Heart left ventricle (tissue), 16 donors: ENCODE measurements at regions of chr5 and their contacts with region 1.

Region 1: DNA sequence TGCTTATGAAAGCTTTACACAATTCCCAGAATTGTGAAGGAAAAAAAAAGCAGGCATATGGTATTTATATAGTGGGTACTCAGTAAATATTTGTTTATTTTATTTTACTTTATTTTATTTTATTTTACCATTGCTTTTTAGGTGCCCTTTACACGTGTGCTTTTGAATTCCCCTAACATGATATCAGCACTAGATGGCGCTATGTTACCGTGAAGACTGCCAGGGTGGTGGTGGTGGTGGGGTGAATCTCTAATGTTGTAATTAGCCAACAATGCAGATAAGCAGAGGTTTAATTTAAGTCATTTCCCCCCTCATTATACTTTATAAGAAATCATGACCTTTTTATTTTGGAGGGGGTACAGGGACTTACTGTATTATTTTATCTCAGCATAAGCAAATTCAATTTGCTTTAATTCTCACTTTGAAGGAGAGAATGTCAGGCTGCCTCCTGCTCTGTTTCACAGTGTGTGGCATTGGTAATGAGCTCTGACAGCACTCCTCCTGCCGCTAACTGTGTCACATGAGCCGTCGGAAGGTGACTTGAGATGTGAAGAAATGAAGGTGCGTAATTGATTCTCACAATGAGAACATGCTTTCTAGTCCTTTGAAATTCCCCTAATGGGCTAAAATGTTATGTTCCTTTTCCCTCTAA is 165.6 kb downstream of the YTHDC2 start:
- DNase-seq: peak in 1 of 5 donors; percentile 13
- ATAC-seq: peak in 3 of 4 donors; percentile 55 to 68 (median 63)
- H3K4me3 ChIP-seq: no peak overlapping the region
- H3K27ac ChIP-seq: no peak overlapping the region
- H3K4me1 ChIP-seq: no peaks in the 10 kb centered on the region
- H3K27me3 ChIP-seq: no peaks in the 10 kb centered on the region
- CTCF ChIP-seq: peak; percentile 33 to 78 (median 67)
- POLR2A ChIP-seq: no peak

Region 2: GRCh38 chr5:113447498-113448050 is 231.5 kb before region 1 on chr5:
- intact Hi-C with region 1: no loop called
- DNase-seq: no peak
- ATAC-seq: peak in 1 of 4 donors; percentile 41
- H3K4me3 ChIP-seq: no peak overlapping the region
- H3K27ac ChIP-seq: no peak overlapping the region
- H3K4me1 ChIP-seq: peaks cover 0 to 10% (median 0%) of the 10 kb centered on the region in 12 donors
- H3K27me3 ChIP-seq: no peaks in the 10 kb centered on the region
- CTCF ChIP-seq: no peak
- POLR2A ChIP-seq: no peak

Region 3: GRCh38 chr5:114305402-114306211 is 626.6 kb after region 1 on chr5:
- intact Hi-C with region 1: loop called in 1 of 10 experiments (anchors 10 kb)
- DNase-seq: no peak
- ATAC-seq: peak in 2 of 4 donors; percentile 28 to 50
- H3K4me3 ChIP-seq: no peak overlapping the region
- H3K27ac ChIP-seq: no peak overlapping the region
- H3K4me1 ChIP-seq: no peaks in the 10 kb centered on the region
- H3K27me3 ChIP-seq: no peaks in the 10 kb centered on the region
- CTCF ChIP-seq: peak; percentile 16 to 64 (median 42)
- POLR2A ChIP-seq: no peak

Region 4: DNA sequence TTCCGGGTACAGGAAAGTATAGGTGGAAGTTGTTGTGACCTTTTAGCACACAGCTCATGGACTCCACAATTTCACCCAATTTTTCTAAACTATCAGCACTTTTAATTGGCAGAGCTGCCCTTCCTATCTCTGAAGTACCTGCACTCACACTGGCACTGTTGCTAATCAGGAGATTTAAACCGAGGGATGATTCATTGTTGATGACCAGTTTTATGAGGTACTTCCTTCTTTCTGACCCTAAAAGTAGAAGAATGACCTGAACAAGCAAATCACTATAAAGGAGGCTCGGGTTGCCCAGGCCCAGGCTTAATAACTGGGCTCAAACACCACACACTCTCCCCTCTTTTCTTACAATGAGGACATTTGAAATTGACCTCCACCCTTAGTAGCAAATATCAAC is 788.7 kb after region 1 on chr5:
- intact Hi-C with region 1: no loop called
- DNase-seq: no peak
- ATAC-seq: no peak
- H3K4me3 ChIP-seq: no peak overlapping the region
- H3K27ac ChIP-seq: no peak overlapping the region
- H3K4me1 ChIP-seq: no peaks in the 10 kb centered on the region
- H3K27me3 ChIP-seq: no peaks in the 10 kb centered on the region
- CTCF ChIP-seq: no peak
- POLR2A ChIP-seq: no peak

Region 5: DNA sequence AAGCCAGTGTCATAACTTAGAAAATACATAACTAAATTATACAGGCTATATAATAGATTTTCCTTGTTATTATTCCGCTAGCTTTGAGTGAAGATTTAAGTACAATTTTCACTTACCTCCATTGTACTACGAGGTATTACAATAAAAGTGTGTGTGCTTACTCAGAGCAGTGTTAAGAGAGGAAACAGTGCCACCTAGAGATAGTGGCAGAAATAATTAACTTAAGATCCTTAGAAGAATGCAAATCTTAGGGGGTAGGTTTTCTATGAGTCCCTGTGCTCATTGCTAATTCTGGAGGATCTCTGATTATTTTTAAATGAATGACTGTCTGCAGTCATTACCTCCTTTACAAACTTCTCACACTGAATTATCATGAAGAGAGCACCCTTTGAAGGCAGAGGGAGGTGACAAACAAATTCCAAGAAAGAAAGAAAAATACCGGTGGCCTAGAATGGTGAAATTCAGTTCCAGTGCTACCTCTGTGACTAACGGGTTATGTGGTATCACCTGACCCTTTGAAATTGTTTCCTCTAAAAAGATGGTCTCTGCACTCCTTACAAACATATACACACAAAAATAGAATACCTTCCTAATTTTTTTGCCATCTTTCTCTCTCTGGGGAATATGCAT is 1110.8 kb after region 1 on chr5:
- intact Hi-C with region 1: loop called in 7 of 10 experiments (anchors 2 to 10 kb)
- DNase-seq: no peak
- ATAC-seq: peak in 1 of 4 donors; percentile 29
- H3K4me3 ChIP-seq: no peak overlapping the region
- H3K27ac ChIP-seq: no peak overlapping the region
- H3K4me1 ChIP-seq: no peaks in the 10 kb centered on the region
- H3K27me3 ChIP-seq: peaks cover 0 to 21% (median 0%) of the 10 kb centered on the region in 9 donors
- CTCF ChIP-seq: peak in 10 of 12 donors; percentile 20 to 55 (median 36)
- POLR2A ChIP-seq: no peak

Region 6: DNA sequence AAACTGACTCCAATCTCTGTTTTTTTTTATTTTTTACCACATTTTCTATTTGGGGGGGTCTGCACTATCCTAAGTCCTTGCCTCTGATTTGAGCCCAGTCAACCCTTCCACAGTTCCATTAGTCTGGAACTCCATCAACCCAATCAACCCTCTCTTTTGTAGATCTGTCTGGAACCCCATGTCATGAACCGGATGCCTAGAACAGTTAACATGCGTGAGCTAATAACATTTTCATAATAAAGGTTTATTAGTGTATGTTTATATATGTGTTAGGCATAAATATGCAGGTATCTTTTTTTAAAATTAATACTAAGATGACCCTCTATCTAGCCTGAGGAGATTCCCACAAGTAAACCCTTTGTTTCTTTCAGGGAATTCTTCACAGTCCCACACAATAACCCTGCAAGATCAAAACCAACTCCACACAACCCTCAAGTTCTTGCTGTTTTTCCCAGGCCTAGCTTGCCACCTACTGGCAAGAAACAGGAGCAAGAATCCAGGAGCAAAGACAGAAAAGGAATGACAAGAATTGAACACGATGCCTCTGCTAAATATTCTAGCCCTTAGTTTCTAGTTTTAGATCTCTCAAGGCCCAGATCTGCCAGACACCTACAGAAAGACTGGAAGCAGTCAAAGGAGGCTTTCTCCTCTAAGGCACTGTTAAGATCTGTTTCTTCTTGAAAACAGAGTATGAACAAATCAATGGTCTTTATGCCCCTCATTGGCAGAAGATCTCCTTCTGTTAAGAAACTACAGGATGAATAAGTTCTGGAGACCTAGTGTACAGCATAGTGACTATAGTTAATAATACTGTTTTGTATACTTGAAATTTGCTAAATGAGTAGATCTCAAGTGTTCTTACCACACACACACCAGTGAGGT is 1390.3 kb after region 1 on chr5:
- intact Hi-C with region 1: loop called in 2 of 10 experiments (anchors 10 kb)
- DNase-seq: peak in 1 of 5 donors; percentile 8
- ATAC-seq: peak in 1 of 4 donors; percentile 39
- H3K4me3 ChIP-seq: no peak overlapping the region
- H3K27ac ChIP-seq: no peak overlapping the region
- H3K4me1 ChIP-seq: no peaks in the 10 kb centered on the region
- H3K27me3 ChIP-seq: peaks cover 0 to 13% (median 0%) of the 10 kb centered on the region in 9 donors
- CTCF ChIP-seq: peak; percentile 24 to 64 (median 46)
- POLR2A ChIP-seq: no peak